Activated B cell treated with CpG ODN at 0.5 μM for 24 hours (primary cell): ENCODE measurements at regions of chr1 and their contacts with region 1.

Region 1: DNA sequence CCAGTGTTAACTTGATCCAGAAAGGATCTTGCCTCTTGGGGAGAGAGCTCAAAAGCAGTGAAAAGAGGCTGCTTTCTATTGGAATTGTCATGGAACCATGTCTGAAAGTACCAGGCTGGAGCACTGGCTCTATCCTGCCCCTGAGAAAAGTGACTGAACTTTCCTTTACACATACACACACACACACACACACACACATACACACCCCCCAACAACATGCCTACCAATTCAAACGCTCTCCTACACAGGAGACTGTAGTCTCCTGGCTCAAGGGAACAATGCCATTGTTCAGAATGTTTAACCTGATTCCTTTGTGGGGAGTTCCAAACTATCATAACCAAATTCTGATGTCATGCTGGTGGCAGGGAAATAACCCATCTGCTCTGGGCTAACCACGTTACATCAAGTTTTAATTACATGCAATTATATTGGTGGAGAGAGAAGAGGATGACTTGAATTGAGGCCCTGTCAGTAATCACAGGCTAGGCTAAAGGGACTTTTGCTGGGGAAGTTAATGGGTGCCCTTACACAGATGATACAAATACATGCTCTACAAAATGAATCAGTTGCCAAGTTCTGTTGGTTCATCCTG is 52.3 kb upstream of the DUSP10 start:
- DNase-seq: no peak
- ATAC-seq: peak; percentile 80
- H3K4me3 Mint-ChIP-seq: peak overlapping the region; percentile 83
- H3K27ac Mint-ChIP-seq: peak overlapping the region; percentile 97
- H3K4me1 Mint-ChIP-seq: peaks cover 55% of the 10 kb centered on the region
- H3K27me3 Mint-ChIP-seq: no peaks in the 10 kb centered on the region
- CTCF ChIP-seq: no peak

Region 2: GRCh38 chr1:221347706-221348105 is 446.5 kb before region 1 on chr1:
- CTCF ChIA-PET with region 1: no interaction called
- POLR2A ChIA-PET with region 1: no interaction called
- intact Hi-C with region 1: no loop called
- DNase-seq: no peak
- ATAC-seq: no peak
- H3K4me3 Mint-ChIP-seq: no peak overlapping the region
- H3K27ac Mint-ChIP-seq: no peak overlapping the region
- H3K4me1 Mint-ChIP-seq: no peaks in the 10 kb centered on the region
- H3K27me3 Mint-ChIP-seq: peaks cover 4% of the 10 kb centered on the region
- CTCF ChIP-seq: no peak

Region 3: DNA sequence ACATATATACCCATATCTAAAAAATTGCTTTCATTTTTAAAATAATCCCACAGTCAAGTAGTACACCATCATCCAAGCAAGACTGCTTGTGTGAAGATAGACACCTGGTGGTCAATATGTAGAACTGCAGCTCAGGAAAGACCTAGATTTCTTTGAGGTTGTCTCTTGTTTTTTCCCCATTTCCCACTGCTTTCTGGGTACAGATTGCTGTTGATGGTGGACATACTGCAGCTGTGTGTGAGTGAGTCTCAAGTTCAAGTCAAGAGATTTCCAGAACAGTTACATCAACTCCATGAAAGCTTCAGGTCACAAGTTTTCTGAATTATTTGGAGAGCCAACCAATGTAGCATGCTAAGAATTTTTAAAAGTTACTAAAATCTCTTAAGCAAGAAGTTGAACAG is 358.7 kb before region 1 on chr1:
- CTCF ChIA-PET with region 1: no interaction called
- POLR2A ChIA-PET with region 1: no interaction called
- intact Hi-C with region 1: loop called (anchors 1 kb)
- DNase-seq: no peak
- ATAC-seq: peak; percentile 27
- H3K4me3 Mint-ChIP-seq: no peak overlapping the region
- H3K27ac Mint-ChIP-seq: no peak overlapping the region
- H3K4me1 Mint-ChIP-seq: peaks cover 26% of the 10 kb centered on the region
- H3K27me3 Mint-ChIP-seq: peaks cover 4% of the 10 kb centered on the region
- CTCF ChIP-seq: peak; percentile 29

Region 4: DNA sequence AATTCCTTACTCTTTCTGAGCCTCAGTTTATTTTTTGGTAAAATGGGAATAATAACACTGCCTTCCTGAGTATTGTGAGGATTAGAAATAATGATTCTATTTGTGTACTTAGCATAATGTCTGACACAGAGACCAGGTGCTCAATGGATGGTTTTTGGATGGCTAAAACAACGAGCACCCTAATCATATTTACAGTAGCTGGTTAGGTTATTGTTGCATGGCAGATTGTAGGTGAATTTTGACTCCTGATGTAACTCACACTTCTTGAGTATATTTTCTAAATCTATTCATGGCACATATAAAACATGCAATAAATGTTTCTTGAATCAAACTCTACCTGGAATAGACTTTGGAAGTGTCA is 40.4 kb before region 1 on chr1:
- CTCF ChIA-PET with region 1: no interaction called
- POLR2A ChIA-PET with region 1: interaction called, 3 read pairs
- intact Hi-C with region 1: loop called (anchors 1 kb)
- DNase-seq: no peak
- ATAC-seq: peak; percentile 4
- H3K4me3 Mint-ChIP-seq: peak overlapping the region; percentile 71
- H3K27ac Mint-ChIP-seq: peak overlapping the region; percentile 89
- H3K4me1 Mint-ChIP-seq: peaks cover 50% of the 10 kb centered on the region
- H3K27me3 Mint-ChIP-seq: no peaks in the 10 kb centered on the region
- CTCF ChIP-seq: no peak

Region 5: DNA sequence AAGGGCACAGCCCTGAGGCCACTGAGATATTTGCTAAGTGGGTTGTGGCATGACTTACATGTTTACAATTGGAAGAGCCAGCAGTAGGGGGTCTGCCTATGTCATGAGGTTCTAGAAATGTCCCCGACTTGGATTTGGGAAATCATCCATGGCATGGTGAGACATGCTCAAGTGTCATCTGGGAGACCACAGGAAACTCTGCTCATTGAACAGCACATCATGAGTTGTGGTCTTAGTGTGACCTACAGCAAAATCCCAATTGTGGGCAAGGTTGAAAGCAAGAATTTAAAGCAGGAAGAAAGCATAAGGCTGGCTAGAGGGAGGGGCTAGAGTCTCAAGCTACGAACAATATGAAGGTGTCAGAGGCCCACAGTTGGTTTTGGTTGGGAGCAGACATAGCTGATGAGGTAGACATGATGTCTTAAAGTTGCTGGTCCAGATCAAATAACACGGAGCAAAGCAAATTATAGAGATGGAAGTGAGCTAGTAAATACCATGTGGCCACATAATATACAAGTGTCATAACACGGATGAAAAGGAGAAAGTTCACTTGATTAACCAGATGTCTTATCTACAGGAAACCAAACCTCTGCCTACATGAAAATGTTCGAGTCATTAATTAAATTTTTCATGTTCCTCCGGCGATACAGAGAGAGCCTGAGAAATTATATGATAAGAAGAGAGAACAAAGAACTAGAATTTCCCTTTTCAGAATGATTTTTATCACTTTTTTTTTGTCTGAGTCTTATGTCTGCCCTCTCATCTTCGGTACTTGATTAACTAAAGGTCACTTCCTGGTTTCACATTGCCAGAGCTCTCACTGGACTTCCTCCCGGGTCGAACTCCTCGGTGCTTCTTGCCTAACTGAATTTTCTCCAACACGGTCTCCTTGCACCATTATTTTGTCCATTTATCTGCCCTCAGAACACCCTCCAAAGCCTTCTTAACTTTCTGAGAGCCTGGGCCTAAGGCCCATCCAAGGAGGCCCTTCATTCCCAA is 15.2 kb after region 1 on chr1:
- CTCF ChIA-PET with region 1: interaction called, 5 read pairs
- POLR2A ChIA-PET with region 1: interaction called, 23 read pairs
- intact Hi-C with region 1: loop called (anchors 2 kb)
- DNase-seq: no peak
- ATAC-seq: peak; percentile 73
- H3K4me3 Mint-ChIP-seq: peak overlapping the region; percentile 52
- H3K27ac Mint-ChIP-seq: peak overlapping the region; percentile 91
- H3K4me1 Mint-ChIP-seq: peaks cover 72% of the 10 kb centered on the region
- H3K27me3 Mint-ChIP-seq: no peaks in the 10 kb centered on the region
- CTCF ChIP-seq: no peak

Region 6: DNA sequence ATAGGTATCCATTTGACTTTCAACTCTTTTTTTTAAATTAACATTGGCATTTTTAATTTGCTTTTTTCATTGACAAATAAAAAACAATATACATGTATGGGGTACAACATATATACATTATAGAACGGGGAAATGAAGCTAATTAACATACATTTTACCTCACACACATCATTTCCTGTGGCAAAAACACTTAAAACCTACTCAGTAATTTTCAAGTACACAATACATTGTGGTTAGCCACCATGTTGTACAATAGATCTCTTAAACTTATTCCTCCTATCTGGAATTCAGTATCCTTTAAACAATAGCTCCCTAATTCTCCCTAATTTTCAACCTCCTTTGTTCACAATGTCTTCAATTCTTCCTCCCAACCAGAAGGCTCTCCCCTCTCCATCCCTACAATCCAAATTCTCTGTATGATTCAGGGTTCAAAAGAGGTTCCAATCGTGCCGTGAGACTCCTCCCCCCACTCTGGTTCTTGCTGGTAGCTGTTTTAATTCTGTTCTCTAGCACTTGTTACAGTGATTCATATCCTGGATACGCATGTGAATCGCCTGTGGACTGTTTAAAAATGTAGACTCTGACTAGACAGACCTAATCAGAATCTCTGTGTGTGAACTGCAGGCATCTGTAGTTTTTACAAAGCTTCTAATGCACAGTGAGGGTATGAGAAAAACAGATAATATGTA is 35.3 kb after region 1 on chr1:
- CTCF ChIA-PET with region 1: no interaction called
- POLR2A ChIA-PET with region 1: interaction called, 37 read pairs
- intact Hi-C with region 1: no loop called
- DNase-seq: no peak
- ATAC-seq: peak; percentile 64
- H3K4me3 Mint-ChIP-seq: peak overlapping the region; percentile 66
- H3K27ac Mint-ChIP-seq: peak overlapping the region; percentile 90
- H3K4me1 Mint-ChIP-seq: peaks cover 58% of the 10 kb centered on the region
- H3K27me3 Mint-ChIP-seq: no peaks in the 10 kb centered on the region
- CTCF ChIP-seq: no peak

Region 7: GRCh38 chr1:221878134-221878533 is 84.0 kb after region 1 on chr1:
- CTCF ChIA-PET with region 1: no interaction called
- POLR2A ChIA-PET with region 1: no interaction called
- intact Hi-C with region 1: loop called (anchors 2 kb)
- DNase-seq: no peak
- ATAC-seq: peak; percentile 36
- H3K4me3 Mint-ChIP-seq: no peak overlapping the region
- H3K27ac Mint-ChIP-seq: no peak overlapping the region
- H3K4me1 Mint-ChIP-seq: peaks cover 48% of the 10 kb centered on the region
- H3K27me3 Mint-ChIP-seq: no peaks in the 10 kb centered on the region
- CTCF ChIP-seq: no peak

Region 8: DNA sequence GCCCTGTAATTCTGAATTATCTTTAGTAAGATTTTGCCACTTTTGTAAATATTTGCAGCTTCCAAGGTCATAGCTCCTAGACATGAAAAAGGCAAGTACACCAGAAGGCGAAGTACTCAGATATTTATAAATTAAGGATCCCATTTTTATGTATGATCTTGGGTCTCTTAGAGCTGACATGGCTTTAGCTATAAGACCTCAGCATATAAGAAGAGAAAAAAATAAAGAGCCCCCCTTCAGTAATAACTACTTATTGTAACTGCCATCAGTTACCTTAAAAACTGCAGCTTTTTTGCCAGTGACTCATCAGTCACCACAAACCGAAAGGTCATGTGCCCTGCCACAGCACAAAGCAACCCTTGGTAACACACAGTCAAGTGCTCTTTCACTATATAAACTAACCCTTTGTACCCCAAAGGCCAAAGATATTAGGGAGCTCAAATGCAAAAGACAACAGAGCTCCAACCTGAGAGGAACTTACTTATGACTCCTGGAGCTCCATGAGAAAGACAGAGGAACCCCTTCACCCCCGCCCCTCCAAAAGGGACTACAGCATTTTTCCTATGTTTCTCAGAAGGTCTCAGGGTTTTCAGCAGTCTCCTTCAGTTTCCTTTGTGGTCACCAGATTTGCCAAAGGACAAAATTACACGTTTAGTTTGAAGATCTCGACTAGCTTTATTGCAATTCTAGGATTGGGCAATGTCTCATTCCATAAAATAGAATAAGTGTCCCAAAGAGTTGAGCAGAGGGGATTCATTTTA is 167.5 kb after region 1 on chr1:
- CTCF ChIA-PET with region 1: no interaction called
- POLR2A ChIA-PET with region 1: no interaction called
- intact Hi-C with region 1: no loop called
- DNase-seq: no peak
- ATAC-seq: peak; percentile 76
- H3K4me3 Mint-ChIP-seq: no peak overlapping the region
- H3K27ac Mint-ChIP-seq: peak overlapping the region; percentile 4
- H3K4me1 Mint-ChIP-seq: peaks cover 24% of the 10 kb centered on the region
- H3K27me3 Mint-ChIP-seq: no peaks in the 10 kb centered on the region
- CTCF ChIP-seq: no peak

Region 9: GRCh38 chr1:222465211-222466041 is 671.3 kb after region 1 on chr1:
- CTCF ChIA-PET with region 1: no interaction called
- POLR2A ChIA-PET with region 1: no interaction called
- intact Hi-C with region 1: loop called (anchors 2 kb)
- DNase-seq: peak; percentile 89
- ATAC-seq: peak; percentile 93
- H3K4me3 Mint-ChIP-seq: peak overlapping the region; percentile 92
- H3K27ac Mint-ChIP-seq: peak overlapping the region; percentile 98
- H3K4me1 Mint-ChIP-seq: peaks cover 13% of the 10 kb centered on the region
- H3K27me3 Mint-ChIP-seq: peaks cover 6% of the 10 kb centered on the region
- CTCF ChIP-seq: peak; percentile 100

Region 10: DNA sequence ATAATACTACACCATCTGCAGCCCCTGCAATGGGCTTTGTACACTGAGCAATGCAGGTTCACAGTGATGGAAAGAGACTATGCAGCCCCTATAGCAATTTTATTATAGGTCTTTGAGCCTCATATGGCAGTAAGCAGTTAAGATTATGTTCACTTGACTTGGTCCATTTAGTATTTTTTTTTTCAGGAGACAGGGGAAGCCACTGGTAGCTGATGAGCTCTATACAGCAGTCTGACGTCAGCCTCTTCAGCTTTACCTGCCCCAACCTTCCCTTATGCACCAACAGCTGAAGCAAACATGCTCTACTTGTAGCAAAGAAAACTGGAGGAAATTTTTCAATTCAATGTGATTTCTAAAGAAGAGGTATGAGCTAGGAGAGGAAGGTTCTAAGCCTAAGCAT is 885.9 kb after region 1 on chr1:
- CTCF ChIA-PET with region 1: no interaction called
- POLR2A ChIA-PET with region 1: no interaction called
- intact Hi-C with region 1: no loop called
- DNase-seq: no peak
- ATAC-seq: no peak
- H3K4me3 Mint-ChIP-seq: no peak overlapping the region
- H3K27ac Mint-ChIP-seq: no peak overlapping the region
- H3K4me1 Mint-ChIP-seq: no peaks in the 10 kb centered on the region
- H3K27me3 Mint-ChIP-seq: no peaks in the 10 kb centered on the region
- CTCF ChIP-seq: no peak